ENCODE measurements at regions of chr18 and their contacts with region 1.

Region 1: GRCh38 chr18:58863539-58864145 is 1.0 kb upstream of the ZNF532 start:
- DNase-seq: no peak
- H3K4me3 ChIP-seq: peak overlapping the region; percentile 35 to 94 (median 50)
- H3K27ac ChIP-seq: peak overlapping the region; percentile 93
- H3K4me1 ChIP-seq: peaks cover 30 to 62% (median 47%) of the 10 kb centered on the region in 4 experiments
- H3K27me3 ChIP-seq: no peaks in the 10 kb centered on the region
- CTCF ChIP-seq: no peak
- EP300 ChIP-seq: no peak
- POLR2A ChIP-seq: 0 out of 3 replicates have a peak, but pooled peaks of 1 of the 2 experiments have one; percentile 43
- RAD21 ChIP-seq: no peak

Region 2: GRCh38 chr18:58378411-58379379 is 484.9 kb before region 1 on chr18:
- CTCF ChIA-PET with region 1: no interaction called
- POLR2A ChIA-PET with region 1: no interaction called
- DNase-seq: no peak
- H3K4me3 ChIP-seq: no peak overlapping the region
- H3K27ac ChIP-seq: no peak overlapping the region
- H3K4me1 ChIP-seq: no peaks in the 10 kb centered on the region; a peak in 2 of 7 replicates
- H3K27me3 ChIP-seq: no peaks in the 10 kb centered on the region
- CTCF ChIP-seq: no peak
- EP300 ChIP-seq: no peak
- POLR2A ChIP-seq: no peak
- RAD21 ChIP-seq: no peak

Region 3: DNA sequence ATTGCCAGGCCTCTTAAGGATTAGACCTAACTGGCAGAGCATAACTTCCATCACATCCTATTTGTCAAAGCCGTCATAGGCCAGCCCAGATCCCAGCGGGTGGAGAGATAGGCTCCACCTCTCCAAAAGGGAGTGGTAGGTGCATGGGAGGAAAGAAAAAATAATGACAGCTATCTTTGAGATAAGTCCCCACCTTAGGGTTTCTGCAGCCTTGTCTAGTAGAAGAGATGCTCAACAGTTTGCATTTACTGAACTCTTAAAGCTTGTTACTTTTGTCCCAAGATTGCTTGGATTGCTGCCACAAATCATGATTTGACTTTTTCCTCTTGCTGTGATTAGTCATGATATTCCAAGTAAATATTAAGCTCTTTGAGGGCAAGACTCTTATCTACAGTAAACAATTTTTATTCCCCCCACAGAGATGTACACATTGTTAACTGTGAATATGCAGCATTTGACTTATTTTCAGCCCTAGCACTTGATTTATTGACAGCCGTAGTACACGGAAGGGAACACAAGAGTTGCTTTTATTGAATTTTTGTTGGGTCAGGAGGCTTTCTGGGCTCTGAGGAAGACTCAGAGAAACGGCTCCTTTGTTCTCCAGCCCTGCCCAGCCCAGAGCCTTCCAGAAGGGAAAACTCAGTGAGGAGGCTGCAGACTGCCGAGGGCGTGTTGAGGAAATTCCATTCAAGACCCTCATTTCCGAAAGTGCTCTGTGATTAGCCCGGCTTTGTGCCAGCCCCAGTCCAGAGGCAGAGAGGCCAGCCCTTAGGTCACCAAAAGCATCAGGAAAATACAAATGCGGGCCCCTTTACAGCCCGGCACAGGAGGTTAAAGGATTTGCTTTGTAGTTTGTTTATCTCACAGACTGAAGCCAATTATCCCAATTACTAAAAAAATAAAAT is 74.4 kb before region 1 on chr18:
- CTCF ChIA-PET with region 1: interaction called, 5 read pairs
- POLR2A ChIA-PET with region 1: interaction called, 34 read pairs
- DNase-seq: no peak
- H3K4me3 ChIP-seq: no peak overlapping the region
- H3K27ac ChIP-seq: no peak overlapping the region
- H3K4me1 ChIP-seq: peaks cover 4 to 16% (median 12%) of the 10 kb centered on the region in 4 experiments
- H3K27me3 ChIP-seq: no peaks in the 10 kb centered on the region
- CTCF ChIP-seq: no peak
- EP300 ChIP-seq: no peak
- POLR2A ChIP-seq: no peak
- RAD21 ChIP-seq: no peak

Region 4: DNA sequence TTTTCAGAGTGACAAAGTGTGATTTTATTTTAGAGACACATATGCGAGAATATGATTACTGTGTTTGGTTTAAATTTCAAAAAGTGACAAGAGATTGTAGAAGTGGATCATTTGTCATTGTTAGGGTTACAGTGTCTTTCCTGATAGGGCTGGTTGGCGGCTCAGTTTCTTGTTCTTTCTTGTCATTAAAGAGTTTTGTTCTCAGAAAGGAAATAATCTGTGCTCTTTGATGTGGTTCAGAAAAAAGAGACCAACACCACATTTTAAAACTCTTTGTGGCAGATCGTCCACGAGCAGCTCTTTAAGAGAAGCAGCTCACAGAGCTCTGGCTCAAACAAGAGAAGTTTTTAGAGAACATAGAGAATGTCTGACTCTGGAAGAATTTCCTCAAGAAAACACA is 44.6 kb before region 1 on chr18:
- CTCF ChIA-PET with region 1: interaction called, 3 read pairs
- POLR2A ChIA-PET with region 1: interaction called, 11 read pairs
- DNase-seq: no peak
- H3K4me3 ChIP-seq: no peak overlapping the region
- H3K27ac ChIP-seq: no peak overlapping the region
- H3K4me1 ChIP-seq: peaks cover 0 to 5% (median 4%) of the 10 kb centered on the region in 4 experiments; a peak in 2 of 7 replicates
- H3K27me3 ChIP-seq: no peaks in the 10 kb centered on the region
- CTCF ChIP-seq: no peak
- EP300 ChIP-seq: no peak
- POLR2A ChIP-seq: no peak
- RAD21 ChIP-seq: no peak

Region 5: DNA sequence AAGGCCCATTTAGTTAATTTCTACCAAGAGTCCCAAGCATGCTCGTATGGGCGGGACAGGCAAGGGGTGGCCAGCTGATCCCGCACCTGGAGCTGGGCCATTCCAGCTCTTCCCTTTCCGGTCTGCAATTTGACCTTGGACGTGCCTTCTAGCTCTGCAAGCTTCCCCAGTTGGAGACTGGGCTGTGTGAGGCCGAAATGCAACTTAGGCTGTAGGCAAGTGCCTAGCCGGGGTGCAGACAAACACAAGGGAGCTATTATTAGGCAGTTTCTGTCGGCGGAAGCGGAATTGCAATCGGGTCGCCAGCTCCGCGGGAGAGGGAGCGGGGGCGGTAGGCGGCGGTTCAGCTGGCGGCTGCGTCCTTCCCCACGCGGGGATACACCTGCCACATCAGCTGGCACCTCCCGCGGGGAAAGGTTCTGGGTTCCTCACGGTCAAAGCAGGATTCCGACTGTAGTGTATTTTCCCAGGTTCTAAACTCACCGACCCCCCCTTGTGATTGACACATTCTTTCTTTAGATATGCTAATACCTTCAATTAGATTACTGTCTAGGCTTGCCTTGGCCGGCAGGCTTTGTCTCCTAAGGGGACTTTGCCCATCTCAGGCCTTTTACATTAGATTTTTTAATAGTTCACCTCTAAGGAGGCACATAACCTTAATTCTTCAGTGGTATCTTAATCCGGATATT is 16.1 kb before region 1 on chr18:
- CTCF ChIA-PET with region 1: interaction called, 16 read pairs
- POLR2A ChIA-PET with region 1: interaction called, 289 read pairs
- DNase-seq: peak; percentile 88 to 94
- H3K4me3 ChIP-seq: peak overlapping the region in 1 of 4 experiments; percentile 28; a peak in 4 of 8 replicates
- H3K27ac ChIP-seq: peak overlapping the region; percentile 75
- H3K4me1 ChIP-seq: peaks cover 14 to 35% (median 34%) of the 10 kb centered on the region in 4 experiments; a peak in 6 of 7 replicates
- H3K27me3 ChIP-seq: no peaks in the 10 kb centered on the region
- CTCF ChIP-seq: no peak
- EP300 ChIP-seq: peak in 1 of 2 experiments; percentile 83; a peak in 1 of 3 replicates
- POLR2A ChIP-seq: peak in 1 of 2 experiments; percentile 57; a peak in 1 of 3 replicates
- RAD21 ChIP-seq: peak in 1 of 2 experiments; percentile 5; a peak in 1 of 4 replicates

Region 6: GRCh38 chr18:58887613-58887963 is 23.9 kb after region 1 on chr18:
- CTCF ChIA-PET with region 1: interaction called, 6 read pairs
- POLR2A ChIA-PET with region 1: interaction called, 622 read pairs
- DNase-seq: no peak
- H3K4me3 ChIP-seq: no peak overlapping the region
- H3K27ac ChIP-seq: peak overlapping the region; percentile 23; the same call in 1 of the 2 replicates
- H3K4me1 ChIP-seq: peaks cover 0 to 9% (median 6%) of the 10 kb centered on the region in 4 experiments; a peak in 5 of 7 replicates
- H3K27me3 ChIP-seq: no peaks in the 10 kb centered on the region
- CTCF ChIP-seq: no peak
- EP300 ChIP-seq: no peak
- POLR2A ChIP-seq: no peak
- RAD21 ChIP-seq: no peak

Measured in H1 (cell line).